IMR-90 (cell line): ENCODE measurements at regions of chr5 and their contacts with region 1.

Region 1: DNA sequence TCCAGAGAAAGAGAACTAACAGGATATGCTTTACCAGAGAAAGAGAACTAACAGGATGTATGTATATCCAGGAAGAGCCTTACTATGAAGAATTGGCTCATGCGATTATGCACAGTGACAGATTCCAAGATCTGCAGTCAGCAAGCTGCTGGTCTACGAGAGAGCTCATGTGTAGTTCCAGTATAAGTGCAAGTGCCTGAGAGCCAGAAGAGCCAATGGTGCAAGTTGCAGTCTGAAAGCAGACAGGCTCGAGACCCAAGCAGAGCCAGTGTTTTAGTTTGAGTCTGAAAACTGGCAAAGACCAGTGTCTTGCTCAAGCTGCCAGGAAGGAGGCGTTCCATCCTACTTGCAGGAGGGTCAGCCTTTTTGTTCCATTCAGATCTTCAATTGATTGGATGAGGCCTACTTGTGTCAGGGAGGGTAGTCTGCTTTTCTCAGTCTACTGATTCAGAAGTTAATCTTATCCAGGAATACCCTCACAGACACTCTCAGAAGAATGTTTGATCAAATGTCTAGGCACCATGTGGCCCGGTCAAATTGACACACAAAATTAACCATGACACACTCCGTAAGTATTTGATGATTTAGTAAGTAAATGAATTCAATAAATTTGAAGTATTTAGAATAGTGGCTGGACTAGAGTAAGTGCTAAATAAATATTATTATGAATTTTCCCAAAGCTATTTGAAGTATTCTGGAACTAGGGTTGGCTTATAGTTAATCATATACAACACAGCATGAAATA is 372.1 kb upstream of the SGCD start:
- DNase-seq: peak; percentile 77
- ATAC-seq: peak; percentile 79
- H3K4me3 ChIP-seq: no peak overlapping the region
- H3K27ac ChIP-seq: peak overlapping the region; percentile 95
- H3K4me1 ChIP-seq: peaks cover 10% of the 10 kb centered on the region; the same call in 1 of the 2 replicates
- H3K27me3 ChIP-seq: no peaks in the 10 kb centered on the region
- CTCF ChIP-seq: no peak
- POLR2A ChIP-seq: no peak
- RAD21 ChIP-seq: 0 out of 2 replicates have a peak, but pooled peaks have one; percentile 11

Region 2: GRCh38 chr5:156036640-156037039 is 81.8 kb after region 1 on chr5:
- CTCF ChIA-PET with region 1: no interaction called
- POLR2A ChIA-PET with region 1: no interaction called
- dilution Hi-C with region 1: no loop called
- in situ Hi-C with region 1: no loop called
- intact Hi-C with region 1: loop called (anchors 2 kb)
- DNase-seq: peak; percentile 75
- ATAC-seq: peak; percentile 97
- H3K4me3 ChIP-seq: no peak overlapping the region
- H3K27ac ChIP-seq: no peak overlapping the region; the same call in 1 of the 2 replicates
- H3K4me1 ChIP-seq: peaks cover 4% of the 10 kb centered on the region; the same call in 1 of the 2 replicates
- H3K27me3 ChIP-seq: no peaks in the 10 kb centered on the region
- CTCF ChIP-seq: no peak
- POLR2A ChIP-seq: no peak
- RAD21 ChIP-seq: no peak

Region 3: GRCh38 chr5:156120777-156121176 is 165.9 kb after region 1 on chr5:
- CTCF ChIA-PET with region 1: no interaction called
- POLR2A ChIA-PET with region 1: no interaction called
- dilution Hi-C with region 1: no loop called
- in situ Hi-C with region 1: no loop called
- intact Hi-C with region 1: loop called (anchors 5 kb)
- DNase-seq: no peak
- ATAC-seq: peak; percentile 50
- H3K4me3 ChIP-seq: no peak overlapping the region
- H3K27ac ChIP-seq: peak overlapping the region; percentile 72
- H3K4me1 ChIP-seq: peaks cover 6% of the 10 kb centered on the region
- H3K27me3 ChIP-seq: no peaks in the 10 kb centered on the region
- CTCF ChIP-seq: no peak
- POLR2A ChIP-seq: no peak
- RAD21 ChIP-seq: no peak